ENCODE measurements at regions of chr10 and their contacts with region 1.

Region 1: GRCh38 chr10:21732067-21732772 is 198.2 kb downstream of the MLLT10 start:
- DNase-seq: peak; percentile 50
- ATAC-seq: peak; percentile 94
- H3K4me3 ChIP-seq: no peak overlapping the region
- H3K27ac ChIP-seq: no peak overlapping the region
- H3K4me1 ChIP-seq: peaks cover 23% of the 10 kb centered on the region
- H3K27me3 ChIP-seq: no peaks in the 10 kb centered on the region
- CTCF ChIP-seq: peak; percentile 86
- EP300 ChIP-seq: no peak
- POLR2A ChIP-seq: no peak
- RAD21 ChIP-seq: peak; percentile 85

Region 2: DNA sequence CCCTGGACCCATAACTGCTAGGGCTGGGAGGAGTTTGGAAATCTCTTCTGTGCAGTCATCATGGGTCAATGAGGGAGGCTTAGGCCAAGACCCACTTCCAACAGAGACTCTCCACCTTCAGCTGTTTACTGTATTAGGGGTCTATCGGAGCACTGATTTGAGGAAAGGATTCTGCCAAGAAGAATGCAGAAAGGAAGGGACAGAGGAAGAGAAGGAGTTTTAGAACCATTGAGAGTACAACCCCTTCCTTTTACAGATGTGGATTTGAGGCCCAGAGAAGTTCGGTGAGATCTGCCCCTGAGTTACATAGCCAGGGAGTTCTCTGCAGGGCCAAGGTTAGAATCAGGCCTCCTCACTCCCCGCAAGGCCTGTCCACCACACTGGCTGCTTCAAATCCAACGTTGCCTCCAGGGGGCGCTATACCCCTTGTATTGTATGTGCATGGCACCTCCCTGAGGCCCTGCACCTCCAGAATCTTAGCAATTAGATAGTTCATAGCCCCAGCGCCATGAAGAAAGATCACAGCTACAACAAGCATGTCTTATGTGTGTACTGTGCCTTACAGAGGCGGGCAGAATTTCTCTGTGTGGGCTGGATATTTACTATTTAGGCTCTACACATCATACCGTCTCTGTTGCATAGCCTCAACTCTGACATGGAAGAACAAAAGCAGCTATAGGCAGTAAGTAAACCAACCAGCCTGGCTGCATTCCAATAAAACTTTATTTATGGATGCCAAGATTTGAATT is 453.6 kb before region 1 on chr10:
- CTCF ChIA-PET with region 1: no interaction called
- POLR2A ChIA-PET with region 1: no interaction called
- in situ Hi-C with region 1: loop called (anchors 25 kb)
- intact Hi-C with region 1: loop called (anchors 2 kb)
- DNase-seq: peak; percentile 87
- ATAC-seq: peak; percentile 99
- H3K4me3 ChIP-seq: no peak overlapping the region
- H3K27ac ChIP-seq: no peak overlapping the region
- H3K4me1 ChIP-seq: no peaks in the 10 kb centered on the region
- H3K27me3 ChIP-seq: no peaks in the 10 kb centered on the region; a peak in 1 of 5 replicates
- CTCF ChIP-seq: peak; percentile 95
- EP300 ChIP-seq: no peak
- POLR2A ChIP-seq: no peak
- RAD21 ChIP-seq: peak; percentile 92